ENCODE measurements at regions of chr17 and their contacts with region 1.

Region 1: GRCh38 chr17:76567634-76568432 is 17.8 kb downstream of the ST6GALNAC2 start:
- DNase-seq: peak; percentile 68 to 95 (median 94)
- H3K4me3 ChIP-seq: peak overlapping the region in 4 of 7 experiments; percentile 2 to 34 (median 22)
- H3K27ac ChIP-seq: no peak overlapping the region
- H3K4me1 ChIP-seq: peaks cover 3 to 43% (median 32%) of the 10 kb centered on the region in 4 experiments
- H3K27me3 ChIP-seq: no peaks in the 10 kb centered on the region

Region 2: GRCh38 chr17:76492989-76493501 is 74.8 kb before region 1 on chr17:
- CTCF ChIA-PET with region 1: no interaction called
- POLR2A ChIA-PET with region 1: no interaction called
- DNase-seq: peak; percentile 62 to 90 (median 87)
- H3K4me3 ChIP-seq: peak overlapping the region in 5 of 7 experiments; percentile 24 to 63 (median 50)
- H3K27ac ChIP-seq: peak overlapping the region; percentile 50 to 73
- H3K4me1 ChIP-seq: peaks cover 0 to 58% (median 36%) of the 10 kb centered on the region in 4 experiments
- H3K27me3 ChIP-seq: no peaks in the 10 kb centered on the region

Region 3: DNA sequence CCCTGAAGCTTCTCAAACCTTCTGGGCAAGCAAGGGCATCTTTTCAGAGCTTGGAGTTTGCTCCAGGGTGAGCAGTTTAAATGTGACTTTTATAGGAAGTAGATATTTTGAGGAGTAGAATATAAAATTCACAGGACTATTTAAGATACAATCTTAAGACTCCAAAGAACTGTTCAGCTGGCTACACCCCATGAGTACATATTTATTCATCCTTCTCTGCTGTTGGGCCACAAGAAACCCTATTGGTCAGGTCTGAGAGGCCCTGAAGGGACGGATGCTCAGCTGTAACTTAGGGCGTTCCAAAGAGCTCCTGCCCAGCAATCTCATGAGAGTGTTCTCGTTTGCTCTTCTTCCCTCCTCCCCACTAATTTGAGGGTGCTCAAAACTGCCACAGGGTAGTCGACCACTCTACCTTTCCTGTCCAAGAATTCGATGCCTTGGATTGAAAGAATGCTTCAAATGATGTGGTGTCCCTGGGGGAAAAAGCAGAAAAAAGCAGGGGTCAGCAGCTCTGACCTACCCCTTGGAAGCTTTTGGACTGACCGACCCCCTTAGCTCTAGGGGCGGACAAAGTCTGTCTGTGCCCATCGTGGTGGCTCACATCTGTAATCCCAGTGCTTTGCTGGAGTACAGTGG is 10.6 kb after region 1 on chr17:
- CTCF ChIA-PET with region 1: interaction called, 50 read pairs
- POLR2A ChIA-PET with region 1: no interaction called
- DNase-seq: no peak
- H3K4me3 ChIP-seq: no peak overlapping the region
- H3K27ac ChIP-seq: no peak overlapping the region
- H3K4me1 ChIP-seq: peaks cover 0 to 10% (median 3%) of the 10 kb centered on the region in 4 experiments
- H3K27me3 ChIP-seq: peaks cover 0 to 3% (median 0%) of the 10 kb centered on the region in 5 experiments

Region 4: DNA sequence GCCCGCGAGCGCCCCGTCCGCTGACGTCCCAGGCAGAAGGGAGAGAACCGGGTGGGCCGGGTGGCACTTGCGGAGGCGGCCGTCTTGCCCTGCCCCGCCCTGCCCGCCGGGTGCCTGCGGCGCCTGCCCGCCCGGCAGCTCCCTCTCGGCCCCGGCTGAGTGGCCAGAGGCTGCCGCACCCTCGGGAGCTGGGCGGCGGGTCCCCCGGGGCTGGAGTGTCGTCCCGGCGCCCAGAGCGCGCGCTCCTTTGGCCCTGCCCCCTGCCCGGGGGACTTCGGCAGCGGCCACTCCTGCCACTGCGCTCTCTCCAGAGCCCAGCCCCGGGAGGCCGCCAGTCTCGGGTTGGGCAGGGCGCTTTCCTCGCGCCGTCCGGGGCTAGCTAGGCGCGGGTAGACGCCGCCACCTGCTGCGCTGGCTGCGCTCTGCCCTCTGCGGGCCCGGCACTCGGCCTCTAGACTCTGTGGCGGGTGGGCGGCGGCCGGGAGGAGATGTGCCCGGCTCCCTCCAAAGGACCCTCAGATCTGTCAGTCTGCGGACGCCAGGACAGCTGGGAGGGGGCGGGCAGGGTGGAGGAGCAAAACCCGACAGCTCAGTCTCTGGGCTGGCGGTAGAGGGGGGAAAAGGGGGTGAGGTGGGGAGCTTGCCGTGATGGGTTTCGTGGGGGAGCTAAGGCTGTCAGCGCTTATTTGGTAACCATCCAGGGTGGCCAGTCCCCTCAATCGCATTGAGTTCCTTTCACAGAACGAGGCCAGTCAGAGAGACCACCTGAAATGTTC is 18.2 kb after region 1 on chr17 and contains the start of gene ST6GALNAC2:
- CTCF ChIA-PET with region 1: interaction called, 50 read pairs
- POLR2A ChIA-PET with region 1: no interaction called
- DNase-seq: peak; percentile 53 to 75 (median 66)
- H3K4me3 ChIP-seq: peak within 1 kb of the TSS; percentile 42 to 78 (median 60)
- H3K27ac ChIP-seq: no peak within 1 kb of the TSS
- H3K4me1 ChIP-seq: peaks cover 0 to 26% (median 19%) of the 10 kb centered on the region in 4 experiments
- H3K27me3 ChIP-seq: peaks cover 13 to 57% (median 27%) of the 10 kb centered on the region in 5 experiments

Measured in common myeloid progenitor, CD34-positive (primary cell).